Head of caudate nucleus (tissue), 42 donors: ENCODE measurements at regions of chr21 and their contacts with region 1.

Region 1: GRCh38 chr21:33947451-33948095 is 32.0 kb upstream of the ATP5PO start:
- DNase-seq: peak; percentile 49 to 95 (median 79)

Region 2: DNA sequence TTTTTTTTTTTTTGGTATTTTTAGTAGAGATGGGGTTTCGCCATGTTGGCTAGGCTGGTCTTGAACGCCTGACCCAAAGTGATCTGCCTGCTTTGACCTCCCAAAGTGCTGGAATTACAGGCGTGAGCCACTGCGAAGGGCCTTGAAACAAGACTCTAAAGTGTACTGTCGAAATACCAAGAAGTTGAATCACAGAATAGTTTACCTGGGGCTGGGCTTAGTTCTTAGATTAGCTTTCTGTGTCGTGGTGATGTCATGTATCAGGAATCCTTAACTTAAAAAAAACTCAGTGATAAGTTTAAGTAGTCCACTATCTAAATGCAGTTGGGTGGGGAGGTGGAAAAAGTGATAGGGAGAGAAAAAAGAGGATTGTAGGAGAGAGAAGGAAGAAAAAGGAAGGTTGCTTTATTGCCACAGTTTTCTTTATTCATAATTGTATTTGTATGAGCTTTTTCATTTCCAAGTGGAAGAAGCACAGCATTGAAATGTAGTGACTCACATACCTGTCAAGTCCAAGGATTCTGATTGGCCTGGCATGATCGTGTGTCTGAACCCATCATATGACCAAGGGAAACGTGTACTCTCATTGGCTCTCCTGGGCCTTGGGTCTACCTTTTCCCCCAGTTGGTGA is 291.9 kb before region 1 on chr21:
- intact Hi-C with region 1: no loop called
- DNase-seq: no peak

Region 3: DNA sequence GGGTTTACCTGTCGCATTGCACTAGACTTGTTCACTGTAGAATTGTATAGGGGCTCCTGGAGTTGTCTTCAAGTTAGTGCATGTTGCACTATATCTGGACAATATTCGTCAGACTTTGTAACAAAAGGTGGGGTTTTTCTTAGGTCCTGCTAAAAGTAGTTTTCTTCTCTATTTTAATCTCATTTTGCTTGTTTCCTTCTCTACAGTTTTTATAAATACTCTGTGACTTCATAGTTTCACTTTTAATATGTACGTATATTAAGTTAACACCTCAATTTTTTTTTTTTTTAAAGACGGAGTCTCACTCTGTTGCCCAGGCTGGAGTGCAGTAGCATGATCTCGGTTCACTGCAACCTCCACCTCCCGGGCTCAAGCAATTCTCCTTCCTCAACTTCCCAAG is 99.3 kb after region 1 on chr21:
- intact Hi-C with region 1: no loop called
- DNase-seq: no peak

Region 4: GRCh38 chr21:34073032-34073869 is 125.7 kb after region 1 on chr21 and contains the starts of genes MRPS6 and SLC5A3:
- intact Hi-C with region 1: loop called (anchors 10 kb)
- DNase-seq: peak; percentile 41 to 93 (median 82)